HepG2 (cell line): ENCODE measurements at regions of chr20 and their contacts with region 1.

Region 1: GRCh38 chr20:20010639-20011500 is 6.3 kb upstream of the NAA20 start:
- DNase-seq: peak; percentile 91
- ATAC-seq: peak; percentile 82
- H3K4me3 ChIP-seq: peak overlapping the region in 2 of 3 experiments; percentile 11 to 30; a peak in 2 of 6 replicates
- H3K27ac ChIP-seq: peak overlapping the region; percentile 58
- H3K4me1 ChIP-seq: peaks cover 69% of the 10 kb centered on the region
- H3K27me3 ChIP-seq: no peaks in the 10 kb centered on the region
- CTCF ChIP-seq: no peak
- EP300 ChIP-seq: peak in 1 of 2 experiments; percentile 93; a peak in 2 of 4 replicates
- POLR2A ChIP-seq: no peak
- RAD21 ChIP-seq: no peak

Region 2: DNA sequence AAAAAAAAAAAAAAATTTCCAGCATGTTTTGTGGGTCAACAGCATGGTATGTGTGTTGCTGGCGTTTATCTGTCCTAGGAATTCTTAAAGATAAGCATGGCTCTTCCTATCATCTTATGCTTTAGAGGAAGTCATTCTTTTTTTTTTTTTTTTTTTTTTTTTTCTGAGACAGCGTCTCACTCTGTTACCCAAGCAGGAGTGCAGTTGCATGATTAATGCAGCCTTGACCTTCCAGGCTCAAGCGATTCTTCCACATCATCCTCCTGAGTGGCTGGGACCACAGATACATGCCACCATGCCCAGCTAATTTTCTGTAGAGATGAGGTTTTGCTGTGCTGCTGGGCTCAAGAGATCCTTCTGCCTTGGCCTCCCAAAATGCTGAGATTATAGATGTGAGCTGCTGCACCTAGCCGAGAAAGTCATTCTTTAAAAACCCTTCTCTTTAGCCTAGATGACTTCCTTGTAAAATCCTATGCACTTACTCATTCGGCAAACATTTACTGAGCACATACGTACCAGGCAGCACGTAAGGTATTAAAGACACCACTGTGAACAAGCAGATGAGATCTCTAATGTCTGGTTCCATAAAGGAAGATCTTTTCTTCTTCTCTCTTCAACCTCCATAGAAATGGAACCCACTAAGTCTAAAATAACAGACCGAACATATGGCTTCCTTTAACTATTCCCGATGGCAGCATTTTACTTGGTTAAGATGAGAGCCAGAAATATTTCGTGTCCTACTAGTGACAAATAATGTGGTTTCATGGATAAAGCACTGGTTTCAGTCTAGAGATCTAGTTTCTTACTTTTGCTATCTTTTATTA is 130.4 kb before region 1 on chr20:
- CTCF ChIA-PET with region 1: no interaction called
- POLR2A ChIA-PET with region 1: interaction called, 6 read pairs
- in situ Hi-C with region 1: no loop called
- intact Hi-C with region 1: loop called (anchors 2 kb)
- DNase-seq: peak; percentile 88
- ATAC-seq: peak; percentile 68
- H3K4me3 ChIP-seq: no peak overlapping the region; a peak in 1 of 6 replicates
- H3K27ac ChIP-seq: peak overlapping the region; percentile 44
- H3K4me1 ChIP-seq: peaks cover 57% of the 10 kb centered on the region
- H3K27me3 ChIP-seq: no peaks in the 10 kb centered on the region
- CTCF ChIP-seq: no peak
- EP300 ChIP-seq: peak in 1 of 2 experiments; percentile 83; a peak in 3 of 4 replicates
- POLR2A ChIP-seq: no peak
- RAD21 ChIP-seq: no peak